Heart left ventricle (tissue), 16 donors: ENCODE measurements at regions of chr17 and their contacts with region 1.

Region 1: DNA sequence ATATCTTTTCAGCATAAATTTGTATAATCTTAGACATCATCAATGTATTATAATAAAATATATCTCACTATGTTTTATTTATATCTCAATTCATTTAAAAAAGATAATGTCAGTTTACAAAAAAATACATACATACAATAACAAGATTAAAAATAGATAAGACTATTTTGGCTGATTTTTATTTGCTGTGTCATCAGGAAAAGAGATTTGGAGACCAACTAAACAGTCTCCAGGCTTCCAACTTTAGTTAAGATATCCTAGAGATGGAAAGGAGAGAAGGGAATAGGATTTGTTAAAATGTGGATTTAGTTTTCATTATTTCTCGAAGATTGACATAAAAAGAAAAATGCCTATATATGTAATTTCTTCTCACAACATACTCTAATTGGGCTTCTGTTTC is 433.8 kb upstream of the TOM1L1 start:
- DNase-seq: no peak
- ATAC-seq: no peak
- H3K4me3 ChIP-seq: no peak overlapping the region
- H3K27ac ChIP-seq: no peak overlapping the region
- H3K4me1 ChIP-seq: no peaks in the 10 kb centered on the region
- H3K27me3 ChIP-seq: no peaks in the 10 kb centered on the region
- CTCF ChIP-seq: no peak
- POLR2A ChIP-seq: no peak

Region 2: DNA sequence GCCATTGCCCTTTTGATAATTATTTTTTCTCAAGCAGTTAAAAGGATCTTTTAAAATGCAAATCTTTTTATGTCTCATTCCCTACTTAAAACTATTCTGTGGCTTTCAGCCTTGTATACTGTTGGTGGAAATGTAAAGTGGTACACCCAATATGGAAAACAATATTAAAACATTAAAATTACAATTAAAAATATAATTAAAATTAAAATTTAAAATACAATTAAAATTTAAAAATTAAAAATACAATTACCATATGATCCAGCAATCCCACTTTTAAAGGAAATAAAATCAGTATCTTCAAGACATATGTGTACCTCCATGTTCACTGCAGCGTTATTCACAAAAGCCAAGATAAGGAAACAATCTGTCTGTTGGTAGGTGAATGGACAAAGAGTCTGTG is 93.0 kb after region 1 on chr17:
- intact Hi-C with region 1: loop called in 1 of 10 experiments (anchors 10 kb)
- DNase-seq: no peak
- ATAC-seq: no peak
- H3K4me3 ChIP-seq: no peak overlapping the region
- H3K27ac ChIP-seq: no peak overlapping the region
- H3K4me1 ChIP-seq: no peaks in the 10 kb centered on the region
- H3K27me3 ChIP-seq: no peaks in the 10 kb centered on the region
- CTCF ChIP-seq: no peak
- POLR2A ChIP-seq: no peak